HepG2 (cell line): ENCODE measurements at regions of chr15 and their contacts with region 1.

Region 1: GRCh38 chr15:40506964-40507571 is 36.3 kb downstream of the CHST14 start:
- DNase-seq: peak; percentile 69
- ATAC-seq: peak; percentile 91
- H3K4me3 ChIP-seq: peak overlapping the region in 2 of 3 experiments; percentile 17 to 52; a peak in 2 of 6 replicates
- H3K27ac ChIP-seq: no peak overlapping the region
- H3K4me1 ChIP-seq: peaks cover 24% of the 10 kb centered on the region
- H3K27me3 ChIP-seq: peaks cover 4 to 17% of the 10 kb centered on the region in 2 experiments; a peak in 4 of 5 replicates
- CTCF ChIP-seq: peak; percentile 96
- EP300 ChIP-seq: no peak
- POLR2A ChIP-seq: no peak
- RAD21 ChIP-seq: peak; percentile 83

Region 2: DNA sequence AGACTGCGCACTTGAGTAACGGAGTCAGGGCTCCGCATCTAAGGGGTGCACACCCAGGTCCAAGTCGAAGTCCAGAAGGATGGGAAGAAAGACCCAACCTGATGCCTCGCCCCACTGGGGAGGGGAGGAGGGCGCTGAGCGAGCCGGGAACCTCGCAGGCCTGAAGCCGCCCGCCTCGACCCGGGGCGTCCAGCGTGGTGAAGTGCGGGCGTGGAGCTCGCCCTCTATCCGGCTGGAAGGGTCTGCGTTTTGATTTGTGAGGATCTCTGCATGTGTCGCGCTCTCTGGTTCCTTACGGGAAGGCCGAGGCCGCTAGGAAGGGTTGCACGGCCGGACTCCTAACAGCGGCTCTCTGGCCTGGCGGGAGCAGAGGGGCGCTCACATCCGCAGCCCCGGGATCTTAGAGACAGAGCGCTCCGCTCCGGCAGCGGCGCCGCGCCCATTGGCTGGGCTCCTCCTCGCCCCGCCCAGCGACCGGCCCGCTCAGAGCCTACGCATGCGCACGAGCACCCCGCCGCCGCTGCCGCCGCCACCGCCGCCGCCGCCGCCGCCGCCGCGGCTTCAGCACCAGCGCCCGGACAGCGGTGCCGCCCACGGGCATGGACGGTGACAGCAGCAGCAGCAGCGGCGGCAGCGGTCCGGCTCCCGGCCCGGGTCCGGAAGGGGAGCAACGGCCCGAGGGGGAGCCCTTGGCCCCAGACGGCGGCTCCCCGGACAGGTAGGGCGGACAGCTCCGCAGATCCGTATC is 149.2 kb before region 1 on chr15 and contains the start of gene DISP2:
- CTCF ChIA-PET with region 1: no interaction called
- POLR2A ChIA-PET with region 1: no interaction called
- in situ Hi-C with region 1: no loop called
- intact Hi-C with region 1: no loop called
- DNase-seq: peak; percentile 60
- ATAC-seq: peak; percentile 87
- H3K4me3 ChIP-seq: peak within 1 kb of the TSS; percentile 42 to 67 (median 58)
- H3K27ac ChIP-seq: no peak within 1 kb of the TSS
- H3K4me1 ChIP-seq: peaks cover 25% of the 10 kb centered on the region
- H3K27me3 ChIP-seq: peaks cover 3 to 50% of the 10 kb centered on the region in 2 experiments; a peak in 4 of 5 replicates
- CTCF ChIP-seq: peak; percentile 18
- EP300 ChIP-seq: no peak
- POLR2A ChIP-seq: no peak
- RAD21 ChIP-seq: 0 out of 2 replicates have a peak, but pooled peaks have one; percentile 27
- total RNA-seq, gene DISP2: 0.09 and 0.15 TPM in 2 replicates

Region 3: GRCh38 chr15:40440743-40441564 is 66.1 kb before region 1 on chr15 and contains the start of gene BAHD1:
- CTCF ChIA-PET with region 1: interaction called, 4 read pairs
- POLR2A ChIA-PET with region 1: no interaction called
- in situ Hi-C with region 1: loop called (anchors 5 kb)
- intact Hi-C with region 1: loop called (anchors 5 kb)
- DNase-seq: peak; percentile 85
- ATAC-seq: peak; percentile 78
- H3K4me3 ChIP-seq: peak within 1 kb of the TSS; percentile 72 to 88 (median 81)
- H3K27ac ChIP-seq: peak within 1 kb of the TSS; percentile 75
- H3K4me1 ChIP-seq: peaks cover 64% of the 10 kb centered on the region
- H3K27me3 ChIP-seq: peaks cover 2 to 41% of the 10 kb centered on the region in 2 experiments; a peak in 4 of 5 replicates
- CTCF ChIP-seq: peak; percentile 30
- EP300 ChIP-seq: no peak
- POLR2A ChIP-seq: 0 out of 4 replicates have a peak, but pooled peaks of 1 of the 2 experiments have one; percentile 49
- RAD21 ChIP-seq: no peak
- total RNA-seq, gene BAHD1: 8.1 and 8.7 TPM in 2 replicates

Region 4: DNA sequence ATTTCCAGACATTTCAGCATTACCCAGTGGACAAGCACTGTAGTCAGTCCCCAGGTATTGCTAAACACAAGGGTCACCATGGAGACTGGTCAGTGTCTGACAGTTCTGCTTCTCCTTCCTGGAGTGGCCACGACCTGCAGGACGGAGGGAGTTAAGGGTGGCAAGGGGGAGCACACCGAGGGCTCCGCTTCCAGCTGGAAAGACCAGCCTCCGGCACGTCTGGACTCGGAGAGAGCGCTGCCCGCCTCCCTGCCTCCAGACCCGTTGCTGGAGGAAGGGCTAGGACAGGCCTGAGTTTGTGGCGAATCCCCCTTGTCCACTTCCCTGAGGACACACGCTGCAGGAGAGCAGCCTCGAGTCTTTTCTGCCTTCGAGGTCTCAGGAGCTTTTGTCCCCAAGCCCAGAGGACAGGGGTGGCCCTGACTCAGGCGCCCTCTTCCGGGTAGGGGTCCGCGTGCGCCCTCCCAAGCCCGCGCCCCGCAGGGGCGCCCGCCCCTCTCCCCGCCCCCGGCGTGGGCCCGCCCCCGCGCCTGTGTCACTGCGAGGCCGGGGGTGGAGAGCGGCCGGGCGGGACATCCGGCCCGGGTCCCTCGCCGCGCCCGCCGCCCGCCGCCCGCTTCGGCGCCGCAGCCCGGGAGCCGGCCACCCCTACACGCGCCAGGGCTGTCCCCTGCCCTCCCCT is 36.5 kb before region 1 on chr15 and contains the start of gene CHST14:
- CTCF ChIA-PET with region 1: no interaction called
- POLR2A ChIA-PET with region 1: no interaction called
- in situ Hi-C with region 1: no loop called
- intact Hi-C with region 1: loop called (anchors 5 kb)
- DNase-seq: peak; percentile 56
- ATAC-seq: peak; percentile 82
- H3K4me3 ChIP-seq: peak within 1 kb of the TSS; percentile 81 to 89 (median 89)
- H3K27ac ChIP-seq: peak within 1 kb of the TSS; percentile 80
- H3K4me1 ChIP-seq: peaks cover 29% of the 10 kb centered on the region
- H3K27me3 ChIP-seq: peaks cover 0 to 7% of the 10 kb centered on the region in 2 experiments; a peak in 1 of 5 replicates
- CTCF ChIP-seq: peak; percentile 49
- EP300 ChIP-seq: no peak
- POLR2A ChIP-seq: peak; percentile 69 to 72
- RAD21 ChIP-seq: peak; percentile 51
- total RNA-seq, gene CHST14: 6.4 and 12.4 TPM in 2 replicates